Natural killer cell (primary cell): ENCODE measurements at regions of chr1 and their contacts with region 1.

Region 1: GRCh38 chr1:62436466-62437256 is at the start of gene USP1:
- DNase-seq: peak; percentile 96 to 99
- ATAC-seq: peak; percentile 79 to 92 (median 80)
- H3K4me3 ChIP-seq: peak within 1 kb of the TSS; percentile 84
- H3K4me3 Mint-ChIP-seq: peak within 1 kb of the TSS; percentile 94
- H3K27ac ChIP-seq: peak within 1 kb of the TSS; percentile 93
- H3K27ac Mint-ChIP-seq: peak within 1 kb of the TSS; percentile 98 to 99
- H3K4me1 ChIP-seq: peaks cover 14% of the 10 kb centered on the region
- H3K4me1 Mint-ChIP-seq: peaks cover 40 to 48% of the 10 kb centered on the region in 2 donors
- H3K27me3 ChIP-seq: no peaks in the 10 kb centered on the region
- H3K27me3 Mint-ChIP-seq: no peaks in the 10 kb centered on the region
- CTCF ChIP-seq: no peak
- total RNA-seq, gene USP1: 22.1 to 34.0 (median 26.8) TPM

Region 2: GRCh38 chr1:61077676-61078541 is 1358.8 kb before region 1 on chr1:
- intact Hi-C with region 1: loop called (anchors 5 kb)
- DNase-seq: peak; percentile 72 to 98
- ATAC-seq: peak; percentile 72 to 82 (median 81)
- H3K4me3 ChIP-seq: peak overlapping the region; percentile 67
- H3K4me3 Mint-ChIP-seq: peak overlapping the region; percentile 96
- H3K27ac ChIP-seq: peak overlapping the region; percentile 63
- H3K27ac Mint-ChIP-seq: peak overlapping the region; percentile 90 to 96
- H3K4me1 ChIP-seq: peaks cover 21% of the 10 kb centered on the region
- H3K4me1 Mint-ChIP-seq: peaks cover 44 to 58% of the 10 kb centered on the region in 2 donors
- H3K27me3 ChIP-seq: peaks cover 3% of the 10 kb centered on the region
- H3K27me3 Mint-ChIP-seq: peaks cover 0 to 12% of the 10 kb centered on the region in 2 donors
- CTCF ChIP-seq: no peak

Region 3: GRCh38 chr1:62450301-62450700 is 13.6 kb after region 1 on chr1:
- intact Hi-C with region 1: loop called (anchors 1 kb)
- DNase-seq: peak in 1 of 2 donors; percentile 22
- ATAC-seq: peak in 2 of 3 donors; percentile 68 to 80
- H3K4me3 ChIP-seq: no peak overlapping the region
- H3K4me3 Mint-ChIP-seq: peak overlapping the region; percentile 79
- H3K27ac ChIP-seq: peak overlapping the region; percentile 25
- H3K27ac Mint-ChIP-seq: peak overlapping the region; percentile 65 to 76
- H3K4me1 ChIP-seq: peaks cover 10% of the 10 kb centered on the region
- H3K4me1 Mint-ChIP-seq: peaks cover 16 to 22% of the 10 kb centered on the region in 2 donors
- H3K27me3 ChIP-seq: no peaks in the 10 kb centered on the region
- H3K27me3 Mint-ChIP-seq: no peaks in the 10 kb centered on the region
- CTCF ChIP-seq: no peak

Region 4: DNA sequence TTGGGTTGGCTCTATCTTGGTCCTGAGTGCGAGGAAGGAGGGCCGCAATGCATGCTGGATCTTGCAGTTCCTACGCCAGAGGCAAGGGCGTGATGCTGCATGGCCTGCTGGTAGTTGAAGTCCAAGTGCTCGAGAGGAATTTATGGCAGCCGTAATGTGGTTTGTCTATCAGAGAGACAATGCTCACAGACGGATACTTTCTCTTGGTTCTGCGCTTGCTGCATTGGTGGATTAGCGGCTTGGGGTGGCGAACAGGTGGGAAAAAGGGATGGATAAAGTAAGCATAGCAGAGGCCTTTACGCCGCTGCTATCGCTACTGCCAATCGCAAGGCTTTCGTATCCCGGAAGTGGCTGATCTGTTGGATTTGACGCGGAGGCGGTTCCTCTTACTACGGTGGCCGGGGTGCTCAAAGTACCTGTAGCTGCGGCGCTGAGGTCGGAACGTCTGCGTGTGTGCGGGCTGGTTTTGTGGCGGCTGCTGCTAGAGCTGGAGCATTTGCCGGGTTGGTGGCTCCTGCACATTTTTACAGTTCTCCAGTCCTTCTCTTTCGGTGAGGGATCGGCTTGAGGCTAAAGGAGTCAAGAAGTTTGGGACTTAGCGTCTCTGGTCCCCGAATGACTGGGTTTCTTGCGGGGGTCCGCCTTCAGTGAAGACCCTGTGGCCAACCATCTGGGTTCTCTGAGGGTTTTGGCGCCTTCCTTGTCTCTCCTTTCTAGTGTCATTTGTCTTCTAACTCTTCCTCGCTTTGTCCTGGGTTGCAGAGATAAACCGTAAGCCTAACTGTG is 347.3 kb after region 1 on chr1 and contains the start of gene ATG4C:
- intact Hi-C with region 1: loop called (anchors 1 kb)
- DNase-seq: peak; percentile 87 to 96
- ATAC-seq: peak; percentile 97 to 98 (median 97)
- H3K4me3 ChIP-seq: peak within 1 kb of the TSS; percentile 63
- H3K4me3 Mint-ChIP-seq: no peak within 1 kb of the TSS
- H3K27ac ChIP-seq: peak within 1 kb of the TSS; percentile 75
- H3K27ac Mint-ChIP-seq: no peak within 1 kb of the TSS
- H3K4me1 ChIP-seq: peaks cover 10% of the 10 kb centered on the region
- H3K4me1 Mint-ChIP-seq: peaks cover 4 to 14% of the 10 kb centered on the region in 2 donors
- H3K27me3 ChIP-seq: no peaks in the 10 kb centered on the region
- H3K27me3 Mint-ChIP-seq: peaks cover 9 to 11% of the 10 kb centered on the region in 2 donors
- CTCF ChIP-seq: no peak
- total RNA-seq, gene ATG4C: 4.8 to 9.7 (median 6.3) TPM